H1 (cell line): ENCODE measurements at regions of chr5 and their contacts with region 1.

Region 1: GRCh38 chr5:157253547-157253946 is 12.4 kb upstream of the CYFIP2 start:
- DNase-seq: peak in 1 of 2 experiments; percentile 83
- H3K4me3 ChIP-seq: no peak overlapping the region
- H3K27ac ChIP-seq: no peak overlapping the region
- H3K4me1 ChIP-seq: no peaks in the 10 kb centered on the region
- H3K27me3 ChIP-seq: no peaks in the 10 kb centered on the region
- CTCF ChIP-seq: peak; percentile 69 to 90 (median 85)
- EP300 ChIP-seq: no peak
- POLR2A ChIP-seq: no peak
- RAD21 ChIP-seq: peak; percentile 83 to 90

Region 2: DNA sequence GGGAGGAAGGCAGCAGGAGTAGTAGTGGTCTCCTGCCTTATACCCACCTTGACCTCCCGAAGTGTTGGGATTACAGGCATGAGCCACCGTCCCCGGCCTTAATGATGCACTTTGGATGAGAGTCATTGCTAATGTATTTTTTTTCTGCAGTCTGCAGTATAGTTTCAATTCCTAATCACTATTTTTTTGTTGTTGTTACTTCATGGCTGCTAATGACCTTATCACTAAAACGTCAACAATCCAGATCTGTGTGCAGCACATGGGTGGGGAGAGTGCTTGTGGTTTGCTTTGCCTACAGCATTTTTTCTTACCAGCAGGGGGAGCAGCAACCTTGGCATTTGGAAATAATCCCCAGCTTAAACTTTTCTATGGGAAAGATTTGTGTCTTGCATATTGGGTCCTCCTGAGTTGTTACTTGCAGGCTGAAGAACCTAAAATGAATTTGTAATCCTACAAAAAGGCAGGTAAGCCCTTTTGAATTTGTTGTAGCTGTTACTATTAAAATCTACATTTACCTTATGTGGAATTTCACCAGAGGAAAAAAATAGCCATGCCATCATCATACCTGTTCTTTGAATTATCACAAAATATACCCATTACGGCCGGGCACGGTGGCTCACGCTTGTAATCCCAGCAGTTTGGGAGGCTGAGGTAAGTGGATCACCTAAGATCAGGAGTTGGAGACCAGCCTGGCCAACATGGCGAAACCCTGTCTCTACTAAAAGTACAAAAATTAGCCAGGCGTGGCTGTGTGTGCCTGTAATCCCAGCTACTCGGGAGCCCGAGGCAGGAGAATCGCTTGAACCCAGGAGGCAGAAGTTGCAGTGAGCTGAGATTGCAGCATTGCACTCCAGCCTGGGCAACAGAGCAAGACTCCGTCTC is 104.6 kb before region 1 on chr5:
- CTCF ChIA-PET with region 1: interaction called, 37 read pairs
- POLR2A ChIA-PET with region 1: no interaction called
- DNase-seq: peak; percentile 21 to 79
- H3K4me3 ChIP-seq: no peak overlapping the region
- H3K27ac ChIP-seq: no peak overlapping the region
- H3K4me1 ChIP-seq: no peaks in the 10 kb centered on the region
- H3K27me3 ChIP-seq: no peaks in the 10 kb centered on the region
- CTCF ChIP-seq: peak; percentile 47 to 82 (median 73)
- EP300 ChIP-seq: no peak
- POLR2A ChIP-seq: no peak
- RAD21 ChIP-seq: peak; percentile 77 to 82

Region 3: DNA sequence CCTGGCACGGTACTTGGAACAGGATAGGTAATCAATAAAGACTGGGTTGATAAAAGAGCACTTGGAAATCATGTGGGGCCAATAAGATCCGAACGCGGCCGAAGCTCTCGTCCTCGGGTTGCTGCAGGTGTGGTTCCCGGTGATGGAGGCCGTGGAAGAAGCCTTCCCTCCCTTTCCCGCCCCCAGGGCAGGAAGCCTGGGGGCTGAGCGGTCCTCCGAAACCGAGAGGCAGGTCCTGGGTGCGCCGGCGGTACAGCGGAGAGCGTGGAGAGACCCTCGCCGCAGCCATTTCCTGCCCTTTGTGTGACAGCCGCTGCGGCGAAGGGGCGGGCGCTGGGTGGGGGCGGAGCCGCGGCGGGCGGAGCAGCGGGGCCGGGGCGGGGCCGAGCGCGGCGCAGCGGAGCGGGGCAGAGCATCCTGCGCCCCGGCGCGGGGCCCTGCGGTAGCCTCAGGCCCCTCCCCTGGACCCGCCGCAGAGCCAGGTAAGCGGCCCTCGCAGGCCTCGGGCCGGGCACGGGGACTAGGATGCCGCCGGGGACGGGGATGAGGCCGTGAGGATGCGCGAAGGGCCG is 12.3 kb after region 1 on chr5 and contains the start of gene CYFIP2:
- CTCF ChIA-PET with region 1: interaction called, 84 read pairs
- POLR2A ChIA-PET with region 1: interaction called, 3 read pairs
- DNase-seq: no peak
- H3K4me3 ChIP-seq: peak within 1 kb of the TSS; percentile 59 to 82 (median 68)
- H3K27ac ChIP-seq: peak within 1 kb of the TSS; percentile 60; the same call in 1 of the 2 replicates
- H3K4me1 ChIP-seq: peaks cover 8 to 19% (median 13%) of the 10 kb centered on the region in 4 experiments
- H3K27me3 ChIP-seq: no peaks in the 10 kb centered on the region; a peak in 2 of 7 replicates
- CTCF ChIP-seq: no peak
- EP300 ChIP-seq: no peak
- POLR2A ChIP-seq: peak in 1 of 2 experiments; percentile 73; a peak in 2 of 3 replicates
- RAD21 ChIP-seq: no peak
- total RNA-seq, gene CYFIP2: 80.6 and 85.3 TPM in 2 replicates

Region 4: GRCh38 chr5:157271740-157272271 is 18.3 kb after region 1 on chr5:
- CTCF ChIA-PET with region 1: interaction called, 84 read pairs
- POLR2A ChIA-PET with region 1: interaction called, 3 read pairs
- DNase-seq: no peak
- H3K4me3 ChIP-seq: no peak overlapping the region
- H3K27ac ChIP-seq: no peak overlapping the region
- H3K4me1 ChIP-seq: peaks cover 5 to 15% (median 10%) of the 10 kb centered on the region in 4 experiments
- H3K27me3 ChIP-seq: no peaks in the 10 kb centered on the region
- CTCF ChIP-seq: no peak
- EP300 ChIP-seq: no peak
- POLR2A ChIP-seq: no peak
- RAD21 ChIP-seq: no peak

Region 5: DNA sequence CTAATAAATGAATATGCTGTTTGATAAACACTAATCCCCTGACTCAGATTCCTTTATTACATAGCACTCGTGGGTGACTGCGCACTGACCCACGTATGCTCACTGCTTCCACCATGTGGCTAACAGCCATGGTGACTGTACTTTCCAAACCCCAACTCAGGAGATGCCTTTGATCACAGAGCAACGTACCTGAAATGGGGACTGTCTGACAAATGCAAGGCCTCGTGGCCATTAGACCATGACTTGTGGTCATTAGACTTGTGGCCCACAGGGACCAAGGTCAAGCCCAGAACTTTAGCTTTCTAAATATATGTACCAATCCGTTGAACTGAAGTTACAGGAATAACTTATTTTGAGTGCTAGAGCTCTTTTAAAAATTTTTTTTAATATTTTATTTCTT is 58.9 kb after region 1 on chr5:
- CTCF ChIA-PET with region 1: interaction called, 53 read pairs
- POLR2A ChIA-PET with region 1: no interaction called
- DNase-seq: no peak
- H3K4me3 ChIP-seq: no peak overlapping the region
- H3K27ac ChIP-seq: no peak overlapping the region
- H3K4me1 ChIP-seq: no peaks in the 10 kb centered on the region; a peak in 1 of 7 replicates
- H3K27me3 ChIP-seq: no peaks in the 10 kb centered on the region
- CTCF ChIP-seq: peak; percentile 67 to 75 (median 71)
- EP300 ChIP-seq: no peak
- POLR2A ChIP-seq: no peak
- RAD21 ChIP-seq: peak; percentile 52 to 53